GM12878 (cell line): ENCODE measurements at regions of chr3 and their contacts with region 1.

Region 1: GRCh38 chr3:115658337-115659181 is 35.2 kb downstream of the GAP43 start:
- DNase-seq: no peak
- ATAC-seq: peak; percentile 94
- H3K4me3 ChIP-seq: peak overlapping the region; percentile 77
- H3K27ac ChIP-seq: peak overlapping the region; percentile 78
- H3K4me1 ChIP-seq: peaks cover 15% of the 10 kb centered on the region
- H3K27me3 ChIP-seq: peaks cover 0 to 2% of the 10 kb centered on the region in 2 experiments; a peak in 1 of 4 replicates
- CTCF ChIP-seq: no peak
- EP300 ChIP-seq: no peak
- POLR2A ChIP-seq: peak; percentile 82
- RAD21 ChIP-seq: no peak

Region 2: GRCh38 chr3:115147329-115148141 is 511.0 kb before region 1 on chr3:
- CTCF ChIA-PET with region 1: no interaction called
- POLR2A ChIA-PET with region 1: no interaction called
- RAD21 ChIA-PET with region 1: no interaction called
- SMC1A ChIA-PET with region 1: no interaction called
- in situ Hi-C with region 1: no loop called
- intact Hi-C with region 1: loop called (anchors 2 kb)
- DNase-seq: peak; percentile 99
- ATAC-seq: peak; percentile 90
- H3K4me3 ChIP-seq: peak overlapping the region; percentile 85
- H3K27ac ChIP-seq: peak overlapping the region; percentile 84
- H3K4me1 ChIP-seq: no peaks in the 10 kb centered on the region
- H3K27me3 ChIP-seq: no peaks in the 10 kb centered on the region
- CTCF ChIP-seq: no peak
- EP300 ChIP-seq: peak in 1 of 2 experiments; percentile 21; a peak in 1 of 4 replicates
- POLR2A ChIP-seq: peak; percentile 89
- RAD21 ChIP-seq: no peak

Region 3: DNA sequence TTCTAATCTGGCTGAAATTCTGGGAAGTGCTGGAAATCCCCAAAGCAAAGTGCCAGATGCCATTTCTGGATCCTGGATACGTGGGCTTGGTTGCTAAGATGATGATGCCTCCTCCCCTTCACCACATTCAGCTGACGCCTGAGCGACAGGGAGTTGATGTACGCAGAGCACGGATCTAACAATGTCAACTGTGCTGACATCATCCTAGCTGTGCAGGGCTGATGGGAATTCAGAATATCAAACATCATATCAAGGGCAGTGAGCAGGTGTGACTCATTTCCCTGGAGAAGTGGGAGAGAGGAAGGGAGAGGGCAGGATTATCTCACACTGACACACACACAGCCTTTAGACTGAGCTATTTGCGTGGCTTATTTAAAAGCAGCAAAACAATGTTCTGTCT is 418.8 kb before region 1 on chr3:
- CTCF ChIA-PET with region 1: no interaction called
- POLR2A ChIA-PET with region 1: interaction called, 10 read pairs
- RAD21 ChIA-PET with region 1: no interaction called
- SMC1A ChIA-PET with region 1: no interaction called
- in situ Hi-C with region 1: no loop called
- intact Hi-C with region 1: no loop called
- DNase-seq: no peak
- ATAC-seq: no peak
- H3K4me3 ChIP-seq: no peak overlapping the region
- H3K27ac ChIP-seq: no peak overlapping the region
- H3K4me1 ChIP-seq: no peaks in the 10 kb centered on the region
- H3K27me3 ChIP-seq: no peaks in the 10 kb centered on the region
- CTCF ChIP-seq: no peak
- EP300 ChIP-seq: no peak
- POLR2A ChIP-seq: no peak
- RAD21 ChIP-seq: no peak

Region 4: DNA sequence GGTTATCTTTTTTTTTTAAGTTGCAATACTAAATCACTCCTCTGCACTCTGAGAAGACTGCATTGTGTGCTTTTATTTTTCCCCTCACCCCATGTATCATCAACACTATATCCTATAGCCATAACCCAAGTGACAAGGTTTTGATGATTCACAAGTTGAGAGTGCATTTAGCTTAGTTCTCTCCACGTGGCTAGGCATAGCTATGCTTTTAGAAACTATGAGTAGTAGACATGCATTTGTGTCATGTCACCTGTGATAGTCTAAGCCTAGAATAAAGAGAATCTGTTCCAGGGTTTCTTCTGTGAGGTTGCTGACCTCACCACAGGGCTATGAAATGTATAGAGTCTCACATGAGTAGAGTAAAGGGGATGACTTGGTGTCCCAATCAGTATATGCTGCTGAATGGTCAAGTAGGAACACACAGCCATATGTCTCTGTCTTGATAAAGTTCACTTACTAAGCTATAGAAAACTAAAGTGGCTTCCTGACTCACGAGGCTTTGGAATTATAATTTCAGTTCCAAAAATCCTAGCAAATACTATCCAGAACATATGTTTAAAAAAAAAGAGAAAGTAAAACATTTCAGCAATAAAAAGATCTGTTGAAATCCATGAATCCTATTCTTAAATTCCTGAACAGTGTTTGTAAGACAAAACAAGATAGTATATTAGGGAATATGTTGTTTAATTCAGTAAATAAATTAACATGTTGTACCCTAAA is 580.4 kb after region 1 on chr3:
- CTCF ChIA-PET with region 1: no interaction called
- POLR2A ChIA-PET with region 1: no interaction called
- RAD21 ChIA-PET with region 1: no interaction called
- SMC1A ChIA-PET with region 1: no interaction called
- in situ Hi-C with region 1: no loop called
- intact Hi-C with region 1: no loop called
- DNase-seq: no peak
- ATAC-seq: no peak
- H3K4me3 ChIP-seq: no peak overlapping the region
- H3K27ac ChIP-seq: no peak overlapping the region
- H3K4me1 ChIP-seq: no peaks in the 10 kb centered on the region
- H3K27me3 ChIP-seq: no peaks in the 10 kb centered on the region
- CTCF ChIP-seq: no peak
- EP300 ChIP-seq: no peak
- POLR2A ChIP-seq: no peak
- RAD21 ChIP-seq: no peak